PC-9 (cell line): ENCODE measurements at regions of chr16 and their contacts with region 1.

Region 1: DNA sequence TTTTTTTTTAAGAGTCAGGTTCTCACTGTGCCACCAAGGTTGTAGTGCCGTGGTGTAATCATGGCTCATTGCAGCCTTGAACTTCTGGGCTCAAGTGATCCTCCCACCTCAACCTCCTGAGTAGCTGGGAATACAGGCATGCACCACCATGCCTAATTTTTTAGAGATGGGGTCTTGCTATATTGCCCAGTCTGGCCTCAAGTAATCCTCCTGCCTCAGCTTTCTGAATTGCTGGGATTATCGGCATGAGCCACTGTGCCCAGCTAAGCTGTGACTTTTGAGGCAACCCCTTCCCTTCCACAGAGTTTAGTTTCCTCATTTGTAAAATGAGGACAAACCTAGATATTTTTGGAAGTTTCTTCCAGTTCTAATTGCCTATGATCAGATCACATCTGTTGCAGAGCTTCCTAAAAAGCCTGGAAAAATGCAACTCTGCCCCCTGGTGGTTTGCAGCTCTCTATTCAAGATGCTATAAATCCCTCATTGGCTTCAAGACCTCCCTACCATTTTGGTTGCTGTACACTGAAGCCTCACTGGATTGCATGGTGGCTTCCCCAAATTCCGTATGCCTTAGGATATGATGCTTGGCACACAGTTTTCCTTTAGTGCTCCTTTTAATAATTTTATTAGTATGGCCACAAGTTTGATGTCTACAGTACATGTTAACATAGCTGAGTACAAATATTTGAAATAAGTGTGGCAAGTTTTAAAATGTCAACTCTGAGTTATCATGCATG is 19.3 kb downstream of the GDE1 start:
- DNase-seq: peak; percentile 56 to 73
- H3K4me3 ChIP-seq: no peak overlapping the region
- H3K27ac ChIP-seq: no peak overlapping the region
- H3K4me1 ChIP-seq: peaks cover 37% of the 10 kb centered on the region
- H3K27me3 ChIP-seq: no peaks in the 10 kb centered on the region
- CTCF ChIP-seq: peak; percentile 90

Region 2: GRCh38 chr16:18969050-18969854 is 533.3 kb before region 1 on chr16:
- CTCF ChIA-PET with region 1: no interaction called
- POLR2A ChIA-PET with region 1: no interaction called
- intact Hi-C with region 1: no loop called
- DNase-seq: peak; percentile 47 to 85
- H3K4me3 ChIP-seq: no peak overlapping the region
- H3K27ac ChIP-seq: no peak overlapping the region
- H3K4me1 ChIP-seq: no peaks in the 10 kb centered on the region
- H3K27me3 ChIP-seq: no peaks in the 10 kb centered on the region
- CTCF ChIP-seq: peak; percentile 96

Region 3: DNA sequence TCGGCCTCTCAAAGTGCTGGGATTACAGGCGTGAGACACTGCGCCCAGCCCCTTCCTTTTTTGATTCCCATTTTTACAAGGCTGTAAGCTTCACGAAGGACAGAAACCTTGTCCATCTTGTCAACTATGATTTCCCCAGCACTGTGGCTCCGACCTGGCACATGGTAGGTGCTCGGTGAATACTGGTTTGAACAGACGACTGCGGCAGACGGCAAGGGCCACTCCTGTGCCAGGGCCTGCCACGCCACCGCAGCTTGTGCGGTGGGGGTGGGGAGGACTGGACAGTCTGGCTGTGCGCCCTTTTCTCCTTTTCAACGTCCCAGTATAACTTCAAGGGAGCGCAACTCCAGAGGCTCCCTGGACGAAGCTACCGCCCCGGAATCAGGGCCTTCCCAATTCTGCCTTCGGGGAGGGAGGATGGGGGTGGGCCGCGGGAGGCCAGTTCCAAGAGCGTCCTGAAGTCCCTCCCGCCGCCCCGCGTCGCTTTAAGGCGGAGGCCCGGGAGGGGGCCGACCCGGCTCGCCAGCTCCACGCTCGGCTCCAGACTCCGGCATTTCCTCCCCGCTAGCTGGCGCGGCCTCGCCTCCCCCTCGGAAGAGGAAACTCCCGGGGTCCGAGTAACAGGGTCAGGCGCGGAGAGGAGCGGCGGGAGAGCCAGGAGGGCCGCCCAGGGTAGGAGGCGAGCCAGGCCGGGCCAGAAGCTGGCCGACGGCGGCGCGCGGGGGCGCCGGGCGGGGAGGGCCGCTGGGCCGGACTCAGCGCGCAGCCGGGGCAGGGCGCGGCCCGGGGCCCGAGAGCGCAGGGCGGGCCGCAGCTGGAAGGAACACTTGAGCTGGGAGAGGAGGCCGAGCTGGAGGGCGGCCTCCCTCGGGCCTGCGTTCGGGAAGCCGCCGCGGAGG is 388.9 kb before region 1 on chr16 and contains the start of gene ITPRIPL2:
- CTCF ChIA-PET with region 1: no interaction called
- POLR2A ChIA-PET with region 1: no interaction called
- intact Hi-C with region 1: loop called (anchors 10 kb)
- DNase-seq: peak; percentile 90 to 95
- H3K4me3 ChIP-seq: peak within 1 kb of the TSS; percentile 85
- H3K27ac ChIP-seq: peak within 1 kb of the TSS; percentile 96
- H3K4me1 ChIP-seq: peaks cover 68% of the 10 kb centered on the region
- H3K27me3 ChIP-seq: no peaks in the 10 kb centered on the region
- CTCF ChIP-seq: no peak
- total RNA-seq, gene ITPRIPL2: 117 and 142 TPM in 2 replicates

Region 4: DNA sequence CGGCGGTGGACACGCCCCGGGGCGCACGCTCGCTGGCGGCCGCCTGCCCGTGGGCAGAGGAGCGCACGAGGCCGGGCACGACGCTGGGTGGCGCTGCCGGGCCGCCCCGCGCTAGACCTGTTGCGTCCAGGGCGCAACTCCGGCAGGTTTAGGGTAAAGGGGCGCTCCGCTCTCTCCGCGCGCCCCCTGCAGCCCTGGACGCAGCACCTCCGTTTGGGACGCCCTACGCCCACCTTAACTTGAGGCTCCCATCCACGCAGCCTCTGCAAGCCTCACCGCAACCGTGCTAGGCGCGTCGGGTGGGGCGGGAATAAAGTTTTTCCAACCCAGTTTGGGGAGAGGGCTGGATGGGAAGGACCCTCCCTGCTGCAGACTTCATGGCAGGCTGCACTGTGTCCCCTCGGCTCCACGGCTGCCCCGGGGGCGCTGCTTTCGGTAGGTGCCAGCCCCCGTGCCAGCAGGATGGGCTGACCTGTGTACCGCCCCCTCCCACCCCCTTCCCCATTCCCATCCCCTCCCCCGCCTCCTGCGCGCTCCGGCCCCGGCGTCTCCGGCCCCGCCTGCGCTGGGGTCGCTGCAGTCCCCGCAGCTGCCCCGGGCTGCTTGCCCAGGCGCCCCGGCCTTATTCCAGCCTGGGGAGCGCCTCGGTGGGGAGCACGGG is 334.7 kb before region 1 on chr16 and contains the start of gene SYT17:
- CTCF ChIA-PET with region 1: no interaction called
- POLR2A ChIA-PET with region 1: no interaction called
- intact Hi-C with region 1: loop called (anchors 1 kb)
- DNase-seq: peak; percentile 60 to 90
- H3K4me3 ChIP-seq: peak within 1 kb of the TSS; percentile 96
- H3K27ac ChIP-seq: 0 out of 2 replicates have a peak within 1 kb of the TSS, but pooled peaks have one; percentile 25
- H3K4me1 ChIP-seq: peaks cover 33% of the 10 kb centered on the region
- H3K27me3 ChIP-seq: no peaks in the 10 kb centered on the region
- CTCF ChIP-seq: peak; percentile 75
- total RNA-seq, gene SYT17: 36.6 and 45.2 TPM in 2 replicates

Region 5: DNA sequence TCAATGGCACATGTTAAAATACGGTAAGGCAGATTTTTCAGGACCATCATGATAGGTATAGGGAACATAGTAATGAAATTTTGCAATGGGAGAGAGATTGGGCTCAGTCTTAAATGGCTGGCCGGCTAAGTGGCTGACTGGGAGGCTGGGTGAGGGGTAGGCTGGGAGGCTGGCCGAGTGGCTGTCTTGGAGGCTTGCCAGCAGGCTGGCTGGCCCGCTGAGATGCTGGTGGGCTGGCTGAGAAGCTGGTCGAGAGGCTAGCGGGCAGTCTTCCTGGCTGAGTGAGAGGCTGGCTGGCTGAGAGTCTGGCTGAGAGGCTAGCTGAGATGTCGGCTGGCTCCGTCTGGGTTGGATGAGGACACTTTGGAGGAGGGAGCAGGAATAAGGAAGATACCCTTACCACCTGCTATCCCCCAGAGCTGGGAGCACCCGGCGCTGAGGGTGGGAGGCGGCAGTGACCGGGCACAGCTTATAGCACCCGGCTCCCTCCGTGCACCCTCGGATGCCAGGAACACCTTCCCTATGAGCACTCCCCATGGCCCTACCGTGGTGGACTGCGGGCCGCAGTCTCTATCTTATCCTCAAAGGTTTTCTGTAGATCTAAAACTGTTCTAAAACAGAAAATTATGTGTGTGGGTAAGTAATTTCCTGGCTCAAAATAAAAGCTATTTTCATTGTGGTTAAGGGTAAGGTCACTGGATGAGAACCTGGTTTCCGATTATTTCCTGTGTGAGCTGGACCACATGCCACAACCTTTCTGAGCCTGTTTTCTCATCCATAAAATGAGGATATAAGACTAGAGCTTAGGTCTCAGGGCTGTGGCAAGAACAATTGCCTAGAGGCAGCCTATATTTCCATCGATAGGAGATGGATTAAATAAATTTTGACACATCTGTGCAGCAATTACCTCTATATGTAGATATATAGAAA is 119.4 kb before region 1 on chr16:
- CTCF ChIA-PET with region 1: no interaction called
- POLR2A ChIA-PET with region 1: interaction called, 3 read pairs
- intact Hi-C with region 1: loop called (anchors 2 kb)
- DNase-seq: peak in 1 of 2 experiments; percentile 36
- H3K4me3 ChIP-seq: no peak overlapping the region
- H3K27ac ChIP-seq: peak overlapping the region; percentile 66
- H3K4me1 ChIP-seq: peaks cover 58% of the 10 kb centered on the region
- H3K27me3 ChIP-seq: no peaks in the 10 kb centered on the region
- CTCF ChIP-seq: no peak

Region 6: DNA sequence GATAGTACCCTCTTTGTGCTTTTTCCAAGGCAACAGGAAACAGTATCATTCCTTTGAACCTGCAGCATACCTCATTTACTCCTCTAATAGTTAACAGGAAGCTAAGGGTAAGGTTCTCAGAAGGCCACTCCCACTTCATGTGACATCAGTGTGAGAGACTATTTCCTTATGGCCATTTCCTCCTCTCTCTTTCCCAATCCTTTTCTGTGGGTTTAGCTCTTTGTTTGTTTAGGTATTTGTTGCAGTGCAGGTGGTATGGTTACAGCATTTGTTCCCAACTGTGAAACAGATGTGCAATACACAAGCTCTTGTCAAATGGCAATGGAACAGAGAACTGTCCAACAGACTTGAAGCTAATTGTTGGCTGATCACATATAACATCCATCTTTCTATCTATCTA is 70.1 kb before region 1 on chr16:
- CTCF ChIA-PET with region 1: no interaction called
- POLR2A ChIA-PET with region 1: interaction called, 11 read pairs
- intact Hi-C with region 1: no loop called
- DNase-seq: peak; percentile 49 to 98
- H3K4me3 ChIP-seq: no peak overlapping the region
- H3K27ac ChIP-seq: peak overlapping the region; percentile 87
- H3K4me1 ChIP-seq: peaks cover 22% of the 10 kb centered on the region
- H3K27me3 ChIP-seq: no peaks in the 10 kb centered on the region
- CTCF ChIP-seq: no peak

Region 7: GRCh38 chr16:19474617-19475016 is 27.9 kb before region 1 on chr16:
- CTCF ChIA-PET with region 1: interaction called, 10 read pairs
- POLR2A ChIA-PET with region 1: no interaction called
- intact Hi-C with region 1: no loop called
- DNase-seq: no peak
- H3K4me3 ChIP-seq: no peak overlapping the region
- H3K27ac ChIP-seq: no peak overlapping the region
- H3K4me1 ChIP-seq: peaks cover 14% of the 10 kb centered on the region
- H3K27me3 ChIP-seq: no peaks in the 10 kb centered on the region
- CTCF ChIP-seq: no peak

Region 8: DNA sequence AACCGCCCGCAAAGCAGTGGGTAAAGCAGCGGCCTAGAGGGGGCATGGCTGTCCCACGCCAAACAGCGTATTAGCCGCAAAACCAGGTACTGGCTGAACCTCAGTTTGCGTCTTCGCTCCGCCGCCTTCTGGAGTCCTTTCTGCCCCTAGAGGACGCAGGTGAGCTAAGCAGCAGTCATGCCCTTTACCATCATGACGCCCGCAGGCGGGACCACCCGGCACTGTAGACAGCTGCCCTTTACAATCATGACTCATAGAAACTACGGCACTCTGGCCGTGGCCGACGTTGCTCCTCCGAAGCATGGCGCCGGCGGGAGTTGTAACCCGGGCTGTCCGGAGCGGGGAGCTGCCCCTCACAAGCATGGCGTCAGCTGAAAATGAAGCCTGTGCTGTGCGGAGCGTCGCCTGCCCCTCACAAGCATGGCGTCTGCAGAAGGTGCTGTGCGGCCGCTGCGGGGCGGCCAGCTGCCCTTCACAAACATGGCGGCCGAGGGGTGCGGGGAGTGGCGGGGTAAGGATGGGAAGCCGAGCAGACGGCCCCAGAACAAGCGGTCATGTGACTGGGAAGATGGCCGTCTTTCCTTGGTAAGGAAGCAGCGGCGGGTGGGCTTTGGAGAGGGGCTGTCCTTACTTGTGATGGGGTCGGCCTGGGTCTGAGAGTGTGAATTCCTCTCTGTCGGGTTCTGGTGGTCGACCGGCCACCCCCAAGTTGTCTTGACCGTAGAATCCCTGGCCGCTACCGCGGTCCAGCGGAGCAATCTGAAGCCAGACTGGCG is 52.8 kb after region 1 on chr16 and contains the start of gene VPS35L:
- CTCF ChIA-PET with region 1: no interaction called
- POLR2A ChIA-PET with region 1: no interaction called
- intact Hi-C with region 1: loop called (anchors 5 kb)
- DNase-seq: peak; percentile 73 to 92
- H3K4me3 ChIP-seq: peak within 1 kb of the TSS; percentile 61
- H3K27ac ChIP-seq: no peak within 1 kb of the TSS
- H3K4me1 ChIP-seq: no peaks in the 10 kb centered on the region; the same call in 1 of the 2 replicates
- H3K27me3 ChIP-seq: no peaks in the 10 kb centered on the region
- CTCF ChIP-seq: peak; percentile 62
- total RNA-seq, gene VPS35L: 11.7 and 12.1 TPM in 2 replicates